Esophagus squamous epithelium (tissue), 5 donors: ENCODE measurements at regions of chr11 and their contacts with region 1.

Region 1: GRCh38 chr11:102268329-102269193 is 48.7 kb upstream of the BIRC3 start:
- DNase-seq: peak; percentile 29
- H3K4me3 ChIP-seq: peak overlapping the region; percentile 36 to 67 (median 50)
- H3K27ac ChIP-seq: peak overlapping the region; percentile 85 to 89 (median 86)
- H3K4me1 ChIP-seq: peaks cover 7 to 43% (median 7%) of the 10 kb centered on the region in 3 donors
- H3K27me3 ChIP-seq: no peaks in the 10 kb centered on the region
- CTCF ChIP-seq: peak in 5 of 6 experiments; percentile 46 to 70 (median 58)
- POLR2A ChIP-seq: peak in 1 of 4 donors; percentile 37

Region 2: DNA sequence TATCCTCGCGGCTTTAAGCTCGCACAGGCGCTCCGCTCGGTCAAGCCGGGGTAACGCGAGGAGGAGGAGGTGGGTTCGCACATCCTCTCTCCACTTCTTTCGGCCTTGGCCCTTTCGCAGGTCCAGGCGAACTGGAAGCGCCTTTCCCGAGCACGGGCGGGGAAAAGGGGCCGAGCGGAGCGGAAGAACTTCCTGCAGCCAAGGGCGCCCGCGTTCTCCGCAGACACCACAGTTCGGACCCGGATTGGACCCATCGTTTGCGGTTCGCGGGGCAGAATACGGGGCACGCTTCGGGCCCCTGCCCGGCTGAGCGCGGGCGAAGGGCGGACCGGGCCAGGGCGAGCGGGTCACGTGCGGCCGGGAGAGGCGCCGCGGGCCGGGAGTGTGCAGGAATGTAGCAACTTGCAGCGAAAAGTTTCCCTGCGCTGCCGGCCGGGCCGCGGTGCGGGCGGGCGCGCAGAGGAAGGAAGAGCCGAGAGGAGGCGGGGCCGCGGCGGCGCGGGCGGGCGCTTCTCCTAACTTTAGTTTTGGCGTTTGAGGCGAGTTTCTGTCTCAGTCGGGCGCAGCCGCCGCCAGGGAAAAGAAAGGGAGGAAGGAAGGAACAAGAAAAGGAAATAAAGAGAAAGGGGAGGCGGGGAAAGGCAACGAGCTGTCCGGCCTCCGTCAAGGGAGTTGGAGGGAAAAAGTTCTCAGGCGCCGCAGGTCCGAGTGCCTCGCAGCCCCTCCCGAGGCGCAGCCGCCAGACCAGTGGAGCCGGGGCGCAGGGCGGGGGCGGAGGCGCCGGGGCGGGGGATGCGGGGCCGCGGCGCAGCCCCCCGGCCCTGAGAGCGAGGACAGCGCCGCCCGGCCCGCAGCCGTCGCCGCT is 158.4 kb before region 1 on chr11 and contains the start of gene YAP1:
- intact Hi-C with region 1: loop called (anchors 10 kb)
- DNase-seq: no peak
- H3K4me3 ChIP-seq: peak within 1 kb of the TSS; percentile 86 to 95 (median 95)
- H3K27ac ChIP-seq: peak within 1 kb of the TSS; percentile 96 to 99 (median 98)
- H3K4me1 ChIP-seq: peaks cover 3 to 38% (median 19%) of the 10 kb centered on the region in 3 donors
- H3K27me3 ChIP-seq: peaks cover 0 to 12% (median 0%) of the 10 kb centered on the region in 4 donors
- CTCF ChIP-seq: peak in 1 of 6 experiments; percentile 21
- POLR2A ChIP-seq: peak in 3 of 4 donors; percentile 3 to 72 (median 57)
- total RNA-seq, gene YAP1: 97.0 to 177 (median 142) TPM